ENCODE measurements at regions of chr6 and their contacts with region 1.

Region 1: GRCh38 chr6:97186416-97186999 is 96.5 kb downstream of the MMS22L start:
- DNase-seq: peak; percentile 82
- ATAC-seq: peak; percentile 68
- H3K4me3 Mint-ChIP-seq: no peak overlapping the region
- H3K27ac Mint-ChIP-seq: no peak overlapping the region
- H3K4me1 Mint-ChIP-seq: no peaks in the 10 kb centered on the region
- H3K27me3 Mint-ChIP-seq: no peaks in the 10 kb centered on the region
- CTCF ChIP-seq: peak; percentile 91

Region 2: DNA sequence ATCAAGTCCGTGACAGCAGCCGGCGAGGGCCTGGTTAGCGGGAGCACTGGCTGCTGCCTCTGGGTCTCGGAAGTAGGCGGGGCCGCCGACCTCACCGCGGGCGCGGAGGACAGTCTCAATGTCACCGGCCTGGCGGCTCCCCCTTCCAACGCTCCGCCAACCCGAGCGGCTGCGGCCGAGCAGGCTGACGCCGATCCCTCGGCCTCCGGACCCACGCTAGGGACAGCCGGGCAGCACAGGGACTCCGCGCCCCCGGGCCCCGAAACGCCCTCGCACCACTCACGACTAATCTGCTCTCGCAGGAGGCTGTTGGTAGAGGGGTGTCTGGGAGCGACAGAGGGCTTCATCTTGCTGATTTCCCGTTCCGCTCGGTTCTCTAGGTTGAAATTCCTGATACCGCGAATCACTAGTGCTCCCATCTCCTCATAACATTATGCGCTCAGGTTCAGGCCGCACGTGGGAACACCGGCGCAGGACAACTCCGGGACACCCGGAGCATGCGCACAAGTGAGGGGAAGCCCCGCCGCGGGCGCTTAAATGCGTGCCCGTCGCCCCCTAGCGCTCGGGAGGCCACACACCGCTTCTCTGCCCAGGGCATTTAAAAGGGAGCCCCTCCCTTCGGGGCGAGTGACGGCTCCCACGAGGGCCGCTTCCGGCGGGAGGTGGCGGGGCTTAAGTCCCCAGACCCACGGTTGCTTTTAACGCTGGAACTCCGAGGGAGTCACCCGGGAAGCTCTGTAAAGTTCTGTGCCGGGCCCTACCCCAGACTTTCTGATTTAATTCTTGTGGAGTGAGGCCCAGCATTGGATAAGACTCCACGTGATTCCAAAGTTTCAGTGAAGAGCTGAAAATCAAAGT is 288.9 kb before region 1 on chr6 and contains the start of gene NDUFAF4:
- CTCF ChIA-PET with region 1: no interaction called
- POLR2A ChIA-PET with region 1: no interaction called
- intact Hi-C with region 1: no loop called
- DNase-seq: peak; percentile 97
- ATAC-seq: peak; percentile 94
- H3K4me3 Mint-ChIP-seq: peak within 1 kb of the TSS; percentile 73
- H3K27ac Mint-ChIP-seq: peak within 1 kb of the TSS; percentile 79
- H3K4me1 Mint-ChIP-seq: peaks cover 25% of the 10 kb centered on the region
- H3K27me3 Mint-ChIP-seq: peaks cover 12% of the 10 kb centered on the region
- CTCF ChIP-seq: peak; percentile 86
- total RNA-seq, gene NDUFAF4: 62.5 to 64.6 TPM

Region 3: DNA sequence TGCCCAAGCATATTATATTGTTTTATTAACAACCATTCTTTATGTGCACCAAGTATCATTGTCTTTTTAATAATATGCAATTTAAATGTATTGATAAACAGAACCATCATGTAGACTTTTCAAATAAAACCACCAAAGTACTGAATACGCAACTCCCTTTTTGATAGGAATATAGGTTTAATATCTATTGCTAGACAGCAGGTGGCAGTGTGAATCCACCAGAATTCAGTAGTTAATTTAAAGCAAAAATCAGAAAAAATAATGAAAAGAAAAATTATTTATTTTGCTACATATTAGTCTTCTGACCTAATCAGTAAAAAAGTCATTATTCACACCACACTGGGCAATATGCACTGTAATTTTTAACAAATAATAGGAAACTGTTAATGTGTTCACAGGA is 118.3 kb before region 1 on chr6:
- CTCF ChIA-PET with region 1: interaction called, 4 read pairs
- POLR2A ChIA-PET with region 1: no interaction called
- intact Hi-C with region 1: loop called (anchors 5 kb)
- DNase-seq: peak; percentile 36
- ATAC-seq: no peak
- H3K4me3 Mint-ChIP-seq: no peak overlapping the region
- H3K27ac Mint-ChIP-seq: no peak overlapping the region
- H3K4me1 Mint-ChIP-seq: peaks cover 8% of the 10 kb centered on the region
- H3K27me3 Mint-ChIP-seq: no peaks in the 10 kb centered on the region
- CTCF ChIP-seq: peak; percentile 85

Region 4: GRCh38 chr6:97198046-97198565 is 11.6 kb after region 1 on chr6:
- CTCF ChIA-PET with region 1: interaction called, 31 read pairs
- POLR2A ChIA-PET with region 1: no interaction called
- intact Hi-C with region 1: no loop called
- DNase-seq: no peak
- ATAC-seq: no peak
- H3K4me3 Mint-ChIP-seq: no peak overlapping the region
- H3K27ac Mint-ChIP-seq: no peak overlapping the region
- H3K4me1 Mint-ChIP-seq: no peaks in the 10 kb centered on the region
- H3K27me3 Mint-ChIP-seq: no peaks in the 10 kb centered on the region
- CTCF ChIP-seq: no peak

Region 5: GRCh38 chr6:97203343-97203742 is 16.8 kb after region 1 on chr6:
- CTCF ChIA-PET with region 1: interaction called, 31 read pairs
- POLR2A ChIA-PET with region 1: no interaction called
- intact Hi-C with region 1: no loop called
- DNase-seq: no peak
- ATAC-seq: no peak
- H3K4me3 Mint-ChIP-seq: no peak overlapping the region
- H3K27ac Mint-ChIP-seq: no peak overlapping the region
- H3K4me1 Mint-ChIP-seq: no peaks in the 10 kb centered on the region
- H3K27me3 Mint-ChIP-seq: no peaks in the 10 kb centered on the region
- CTCF ChIP-seq: no peak

Region 6: GRCh38 chr6:97215157-97215769 is 28.8 kb after region 1 on chr6:
- CTCF ChIA-PET with region 1: interaction called, 12 read pairs
- POLR2A ChIA-PET with region 1: no interaction called
- intact Hi-C with region 1: no loop called
- DNase-seq: no peak
- ATAC-seq: no peak
- H3K4me3 Mint-ChIP-seq: no peak overlapping the region
- H3K27ac Mint-ChIP-seq: no peak overlapping the region
- H3K4me1 Mint-ChIP-seq: no peaks in the 10 kb centered on the region
- H3K27me3 Mint-ChIP-seq: no peaks in the 10 kb centered on the region
- CTCF ChIP-seq: no peak

Region 7: GRCh38 chr6:97394160-97394748 is 207.7 kb after region 1 on chr6:
- CTCF ChIA-PET with region 1: interaction called, 10 read pairs
- POLR2A ChIA-PET with region 1: no interaction called
- intact Hi-C with region 1: loop called (anchors 2 kb)
- DNase-seq: peak; percentile 60
- ATAC-seq: peak; percentile 94
- H3K4me3 Mint-ChIP-seq: no peak overlapping the region
- H3K27ac Mint-ChIP-seq: no peak overlapping the region
- H3K4me1 Mint-ChIP-seq: no peaks in the 10 kb centered on the region
- H3K27me3 Mint-ChIP-seq: peaks cover 8% of the 10 kb centered on the region
- CTCF ChIP-seq: peak; percentile 93